Gastrocnemius medialis (tissue), 4 donors: ENCODE measurements at regions of chr2 and their contacts with region 1.

Region 1: GRCh38 chr2:23366720-23367119 is 18.3 kb upstream of the KLHL29 start:
- DNase-seq: no peak
- ATAC-seq: peak; percentile 33 to 41
- H3K4me3 ChIP-seq: no peak overlapping the region
- H3K27ac ChIP-seq: no peak overlapping the region
- H3K4me1 ChIP-seq: no peaks in the 10 kb centered on the region
- H3K27me3 ChIP-seq: no peaks in the 10 kb centered on the region
- CTCF ChIP-seq: peak in 1 of 5 experiments; percentile 16
- POLR2A ChIP-seq: no peak

Region 2: GRCh38 chr2:23183733-23184132 is 183.0 kb before region 1 on chr2:
- in situ Hi-C with region 1: no loop called
- intact Hi-C with region 1: no loop called
- DNase-seq: no peak
- ATAC-seq: no peak
- H3K4me3 ChIP-seq: no peak overlapping the region
- H3K27ac ChIP-seq: no peak overlapping the region
- H3K4me1 ChIP-seq: no peaks in the 10 kb centered on the region
- H3K27me3 ChIP-seq: no peaks in the 10 kb centered on the region
- CTCF ChIP-seq: no peak
- POLR2A ChIP-seq: no peak

Region 3: GRCh38 chr2:23399674-23400261 is 33.0 kb after region 1 on chr2:
- in situ Hi-C with region 1: no loop called
- intact Hi-C with region 1: no loop called
- DNase-seq: no peak
- ATAC-seq: no peak
- H3K4me3 ChIP-seq: no peak overlapping the region
- H3K27ac ChIP-seq: no peak overlapping the region
- H3K4me1 ChIP-seq: peaks cover 0 to 5% of the 10 kb centered on the region in 2 donors
- H3K27me3 ChIP-seq: no peaks in the 10 kb centered on the region
- CTCF ChIP-seq: no peak
- POLR2A ChIP-seq: no peak

Region 4: DNA sequence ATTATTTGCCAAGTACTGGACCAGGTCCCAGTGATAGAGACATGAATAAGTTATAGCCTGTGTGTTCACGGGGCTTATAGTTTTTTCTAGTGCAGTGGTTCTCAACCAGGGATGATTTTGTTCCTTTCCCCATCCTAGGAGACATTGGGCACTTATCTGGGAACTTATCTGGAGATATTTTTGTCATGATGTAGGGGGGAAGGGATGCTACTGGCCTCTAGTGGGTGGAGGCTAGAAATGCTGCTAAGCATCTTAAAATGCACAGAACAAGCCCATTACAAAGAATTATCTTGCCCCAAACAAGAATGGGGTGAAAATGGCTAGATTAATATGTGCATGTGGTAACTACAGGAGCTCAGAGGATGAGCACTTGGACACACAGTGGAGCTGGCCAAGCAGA is 93.5 kb after region 1 on chr2:
- in situ Hi-C with region 1: no loop called
- intact Hi-C with region 1: loop called (anchors 5 kb)
- DNase-seq: no peak
- ATAC-seq: no peak
- H3K4me3 ChIP-seq: no peak overlapping the region
- H3K27ac ChIP-seq: no peak overlapping the region
- H3K4me1 ChIP-seq: no peaks in the 10 kb centered on the region
- H3K27me3 ChIP-seq: no peaks in the 10 kb centered on the region
- CTCF ChIP-seq: peak in 2 of 5 experiments; percentile 15 to 41
- POLR2A ChIP-seq: no peak